CD8-positive, alpha-beta T cell (primary cell): ENCODE measurements at regions of chr16 and their contacts with region 1.

Region 1: GRCh38 chr16:4624015-4624826 is at the start of gene MGRN1:
- DNase-seq: peak; percentile 84 to 96 (median 92)
- ATAC-seq: peak; percentile 94
- H3K4me3 ChIP-seq: peak within 1 kb of the TSS; percentile 64 to 86
- H3K4me3 Mint-ChIP-seq: peak within 1 kb of the TSS; percentile 93
- H3K27ac ChIP-seq: peak within 1 kb of the TSS; percentile 92 to 98
- H3K27ac Mint-ChIP-seq: peak within 1 kb of the TSS; percentile 99
- H3K4me1 ChIP-seq: peaks cover 27% of the 10 kb centered on the region
- H3K4me1 Mint-ChIP-seq: peaks cover 30% of the 10 kb centered on the region
- H3K27me3 ChIP-seq: no peaks in the 10 kb centered on the region
- H3K27me3 Mint-ChIP-seq: no peaks in the 10 kb centered on the region
- CTCF ChIP-seq: peak; percentile 95
- total RNA-seq, gene MGRN1: 46.5 to 48.6 TPM

Region 2: DNA sequence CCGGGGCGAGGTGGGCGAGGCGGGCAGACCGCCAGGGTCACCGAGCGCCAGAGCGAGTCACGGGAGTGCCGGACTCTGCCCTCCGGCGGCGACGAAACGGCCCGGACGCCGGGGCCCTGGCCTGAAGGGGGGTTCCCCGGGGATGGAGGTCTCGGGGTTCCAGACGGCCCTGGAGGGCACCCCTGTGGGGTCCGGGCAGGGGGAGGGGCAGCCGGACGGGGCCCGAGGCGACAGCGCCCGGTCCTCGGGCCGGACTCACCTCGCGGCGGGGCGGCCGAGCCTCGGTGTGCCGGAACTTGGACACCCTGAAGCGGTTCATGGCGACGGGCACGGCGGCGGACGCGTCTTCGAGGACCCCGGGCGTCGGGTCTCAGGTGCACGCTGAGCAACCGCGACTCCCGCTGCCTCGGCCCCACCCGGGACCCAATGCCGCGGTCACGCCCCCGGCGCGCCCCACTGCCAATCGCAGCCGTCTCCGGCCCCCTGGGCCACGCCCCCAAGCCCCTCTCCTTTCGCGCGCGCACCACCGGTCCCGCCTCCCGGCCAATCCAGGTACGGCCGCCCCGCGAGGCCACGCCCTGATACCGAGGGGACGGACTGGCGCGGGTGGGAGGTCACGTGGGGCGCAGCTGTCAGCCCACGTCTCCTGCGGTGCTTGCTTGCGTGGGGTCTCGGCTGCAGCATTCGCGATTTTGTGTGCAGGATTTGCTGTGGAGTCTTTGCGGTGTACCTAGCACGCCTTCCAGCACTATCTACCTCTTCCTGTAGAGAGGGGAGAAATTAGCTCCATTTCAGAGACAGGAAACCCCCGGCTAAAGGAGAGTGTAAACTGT is 207.8 kb before region 1 on chr16 and contains the start of gene CORO7:
- CTCF ChIA-PET with region 1: no interaction called
- POLR2A ChIA-PET with region 1: no interaction called
- intact Hi-C with region 1: loop called in 1 of 2 experiments (anchors 2 kb)
- DNase-seq: peak; percentile 98 to 100 (median 99)
- ATAC-seq: peak; percentile 78
- H3K4me3 ChIP-seq: peak within 1 kb of the TSS; percentile 51 to 60
- H3K4me3 Mint-ChIP-seq: peak within 1 kb of the TSS; percentile 97
- H3K27ac ChIP-seq: peak within 1 kb of the TSS; percentile 89 to 94
- H3K27ac Mint-ChIP-seq: peak within 1 kb of the TSS; percentile 99
- H3K4me1 ChIP-seq: peaks cover 44% of the 10 kb centered on the region
- H3K4me1 Mint-ChIP-seq: peaks cover 33% of the 10 kb centered on the region
- H3K27me3 ChIP-seq: no peaks in the 10 kb centered on the region
- H3K27me3 Mint-ChIP-seq: no peaks in the 10 kb centered on the region
- CTCF ChIP-seq: no peak
- total RNA-seq, gene CORO7: 950 to 991 TPM

Region 3: DNA sequence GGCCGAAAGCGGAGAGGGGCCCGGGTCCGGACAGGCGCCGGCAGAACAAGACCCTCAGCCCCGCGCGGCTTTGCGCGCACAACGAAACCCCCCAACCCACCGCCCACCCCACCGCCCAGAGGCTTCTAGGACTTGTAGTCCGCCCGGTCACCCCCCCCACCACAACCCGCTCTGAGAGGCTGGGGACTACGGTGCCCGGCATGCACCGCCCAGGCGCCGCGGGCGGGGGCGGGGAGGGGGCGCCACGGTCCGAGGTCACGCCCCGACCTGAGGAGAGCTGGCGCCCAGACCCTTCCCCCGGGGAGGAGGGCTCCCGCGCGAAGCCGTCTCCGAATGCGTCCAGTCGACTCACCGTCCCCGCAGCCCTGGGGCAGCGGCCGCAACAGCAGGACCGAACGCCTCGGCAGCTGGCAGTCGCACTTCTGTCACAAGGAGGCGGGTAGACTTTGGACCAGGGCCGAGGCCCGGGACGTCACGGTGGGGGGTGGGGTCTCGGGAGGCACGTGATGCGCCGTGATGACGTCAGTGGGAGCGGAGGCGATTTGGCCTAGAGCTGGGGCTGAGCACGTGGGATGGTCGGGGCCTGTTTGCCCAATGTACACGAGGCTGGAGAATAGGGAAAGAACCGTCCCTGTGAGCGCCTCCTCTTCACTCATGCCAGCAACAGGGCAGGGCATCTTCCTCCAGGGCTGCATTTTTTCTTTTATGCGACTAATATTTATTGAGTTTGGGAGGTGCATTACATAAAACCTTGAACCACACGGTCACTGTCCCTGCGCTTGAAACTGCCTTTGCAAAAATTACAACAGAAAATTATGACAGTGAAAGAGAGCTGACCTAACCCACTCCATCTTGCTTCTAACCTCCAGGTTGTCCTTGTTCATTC is 85.6 kb before region 1 on chr16 and contains the start of gene CDIP1:
- CTCF ChIA-PET with region 1: no interaction called
- POLR2A ChIA-PET with region 1: no interaction called
- intact Hi-C with region 1: loop called in 1 of 2 experiments (anchors 2 kb)
- DNase-seq: peak; percentile 88 to 98 (median 94)
- ATAC-seq: peak; percentile 86
- H3K4me3 ChIP-seq: peak within 1 kb of the TSS; percentile 71
- H3K4me3 Mint-ChIP-seq: peak within 1 kb of the TSS; percentile 80
- H3K27ac ChIP-seq: peak within 1 kb of the TSS; percentile 86 to 90
- H3K27ac Mint-ChIP-seq: peak within 1 kb of the TSS; percentile 92
- H3K4me1 ChIP-seq: peaks cover 45% of the 10 kb centered on the region
- H3K4me1 Mint-ChIP-seq: peaks cover 39% of the 10 kb centered on the region
- H3K27me3 ChIP-seq: no peaks in the 10 kb centered on the region
- H3K27me3 Mint-ChIP-seq: no peaks in the 10 kb centered on the region
- CTCF ChIP-seq: no peak
- total RNA-seq, gene CDIP1: 21.7 to 25.0 TPM

Region 4: DNA sequence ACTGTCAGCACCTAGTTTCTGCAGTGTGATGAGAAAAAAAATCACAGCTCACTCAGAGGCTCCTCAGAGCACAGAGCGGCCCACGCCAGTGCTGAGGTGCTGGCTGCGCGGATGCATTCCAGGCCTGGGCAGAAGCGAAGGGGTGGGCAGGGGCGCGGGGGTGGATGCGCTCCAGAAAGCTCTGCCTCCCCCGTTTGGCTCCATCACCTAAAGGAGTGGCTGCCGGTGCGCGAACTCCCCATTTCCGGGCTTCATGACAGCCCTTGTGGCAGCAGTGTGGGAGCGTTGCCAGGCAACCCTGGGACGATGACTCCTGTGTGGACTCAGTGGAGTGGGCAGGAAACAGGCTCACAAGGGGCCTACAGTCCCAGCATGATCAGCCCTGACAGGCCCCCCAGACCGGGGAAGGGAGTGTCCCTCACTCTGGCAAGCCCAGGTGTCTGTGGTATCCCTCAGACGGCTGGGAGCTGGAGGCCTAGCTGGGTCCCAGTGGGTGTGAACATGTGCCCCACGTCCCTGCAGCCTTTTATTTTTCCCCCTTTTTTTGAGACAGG is 36.3 kb after region 1 on chr16:
- CTCF ChIA-PET with region 1: interaction called, 3 read pairs
- POLR2A ChIA-PET with region 1: interaction called, 6 read pairs
- intact Hi-C with region 1: loop called in 1 of 2 experiments (anchors 2 kb)
- DNase-seq: peak in 8 of 9 experiments; percentile 27 to 90 (median 79)
- ATAC-seq: peak; percentile 47
- H3K4me3 ChIP-seq: peak overlapping the region in 1 of 2 experiments; percentile 44
- H3K4me3 Mint-ChIP-seq: peak overlapping the region; percentile 37
- H3K27ac ChIP-seq: peak overlapping the region; percentile 71 to 73
- H3K27ac Mint-ChIP-seq: peak overlapping the region; percentile 85
- H3K4me1 ChIP-seq: peaks cover 70% of the 10 kb centered on the region
- H3K4me1 Mint-ChIP-seq: peaks cover 63% of the 10 kb centered on the region
- H3K27me3 ChIP-seq: no peaks in the 10 kb centered on the region
- H3K27me3 Mint-ChIP-seq: no peaks in the 10 kb centered on the region
- CTCF ChIP-seq: no peak

Region 5: GRCh38 chr16:4734063-4734729 is 110.0 kb after region 1 on chr16 and contains the starts of genes ANKS3 and DNAAF8:
- CTCF ChIA-PET with region 1: interaction called, 8 read pairs
- POLR2A ChIA-PET with region 1: interaction called, 10 read pairs
- intact Hi-C with region 1: loop called in 1 of 2 experiments (anchors 1 kb)
- DNase-seq: peak; percentile 47 to 90 (median 79)
- ATAC-seq: peak; percentile 73
- H3K4me3 ChIP-seq: peak within 1 kb of the TSS; percentile 81 to 96
- H3K4me3 Mint-ChIP-seq: peak within 1 kb of the TSS; percentile 91
- H3K27ac ChIP-seq: peak within 1 kb of the TSS; percentile 69 to 75
- H3K27ac Mint-ChIP-seq: peak within 1 kb of the TSS; percentile 92
- H3K4me1 ChIP-seq: peaks cover 13% of the 10 kb centered on the region
- H3K4me1 Mint-ChIP-seq: peaks cover 17% of the 10 kb centered on the region
- H3K27me3 ChIP-seq: no peaks in the 10 kb centered on the region
- H3K27me3 Mint-ChIP-seq: no peaks in the 10 kb centered on the region
- CTCF ChIP-seq: no peak
- total RNA-seq, gene ANKS3: 8.6 to 11.8 TPM
- total RNA-seq, gene DNAAF8: not detected